ENCODE measurements at regions of chr9 and their contacts with region 1.

Region 1: DNA sequence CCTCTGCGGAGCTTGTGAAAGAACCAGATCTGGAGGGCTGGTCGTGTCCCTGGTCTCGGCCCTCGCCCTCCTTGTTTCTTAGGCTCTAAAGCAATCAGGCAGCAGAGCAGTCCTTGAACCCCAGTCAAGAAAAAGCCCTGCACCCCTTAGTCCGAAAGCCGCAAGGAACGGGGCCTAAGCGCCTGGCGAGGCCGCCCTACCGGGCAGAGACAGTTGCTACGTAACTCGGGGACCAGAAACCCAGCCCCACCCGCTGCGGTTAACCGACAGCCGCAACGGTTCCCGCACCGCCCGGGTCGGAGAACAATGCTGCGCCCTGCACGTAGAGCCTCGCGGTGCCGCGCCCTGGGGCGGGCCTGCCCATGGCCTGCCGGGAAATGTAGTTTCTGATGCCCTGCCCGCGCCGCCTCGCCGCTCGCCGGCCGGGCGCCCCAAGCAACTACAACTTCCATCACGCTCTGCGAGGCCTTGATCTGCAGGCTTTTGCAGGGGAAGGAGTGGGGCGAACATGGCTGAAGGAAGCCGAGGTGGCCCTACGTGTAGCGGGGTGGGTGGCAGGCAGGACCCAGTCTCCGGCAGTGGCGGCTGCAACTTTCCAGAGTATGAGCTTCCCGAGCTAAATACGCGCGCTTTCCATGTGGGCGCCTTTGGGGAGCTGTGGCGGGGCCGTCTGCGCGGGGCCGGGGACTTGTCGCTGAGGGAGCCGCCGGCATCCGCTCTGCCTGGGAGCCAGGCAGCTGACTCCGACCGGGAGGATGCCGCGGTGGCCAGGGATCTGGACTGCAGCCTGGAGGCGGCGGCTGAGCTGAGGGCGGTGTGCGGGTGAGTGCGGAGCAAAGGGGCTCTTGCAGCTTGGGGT is at the start of gene SNAPC3:
- DNase-seq: peak; percentile 99
- H3K4me3 ChIP-seq: peak within 1 kb of the TSS; percentile 83 to 98 (median 91)
- H3K27ac ChIP-seq: peak within 1 kb of the TSS; percentile 84 to 91 (median 88)
- H3K4me1 ChIP-seq: peaks cover 28 to 57% (median 45%) of the 10 kb centered on the region in 6 donors
- H3K27me3 ChIP-seq: no peaks in the 10 kb centered on the region
- CTCF ChIP-seq: peak in 9 of 11 experiments; percentile 3 to 47 (median 34)
- POLR2A ChIP-seq: peak in 2 of 3 donors; percentile 20 to 67
- total RNA-seq, gene SNAPC3: 27.7 to 45.8 (median 34.4) TPM

Region 2: GRCh38 chr9:15306757-15307534 is 115.7 kb before region 1 on chr9 and contains the start of gene TTC39B:
- intact Hi-C with region 1: loop called (anchors 10 kb)
- DNase-seq: peak; percentile 98
- H3K4me3 ChIP-seq: peak within 1 kb of the TSS; percentile 65 to 92 (median 84)
- H3K27ac ChIP-seq: peak within 1 kb of the TSS; percentile 75 to 91 (median 86)
- H3K4me1 ChIP-seq: peaks cover 17 to 46% (median 33%) of the 10 kb centered on the region in 6 donors
- H3K27me3 ChIP-seq: no peaks in the 10 kb centered on the region
- CTCF ChIP-seq: peak in 1 of 11 experiments; percentile 29
- POLR2A ChIP-seq: peak in 1 of 3 donors; percentile 32
- total RNA-seq, gene TTC39B: 16.8 to 24.1 (median 19.6) TPM

Region 3: GRCh38 chr9:15370466-15371447 is 51.8 kb before region 1 on chr9:
- intact Hi-C with region 1: no loop called
- DNase-seq: no peak
- H3K4me3 ChIP-seq: no peak overlapping the region
- H3K27ac ChIP-seq: no peak overlapping the region
- H3K4me1 ChIP-seq: no peaks in the 10 kb centered on the region
- H3K27me3 ChIP-seq: no peaks in the 10 kb centered on the region
- CTCF ChIP-seq: no peak
- POLR2A ChIP-seq: no peak

Region 4: DNA sequence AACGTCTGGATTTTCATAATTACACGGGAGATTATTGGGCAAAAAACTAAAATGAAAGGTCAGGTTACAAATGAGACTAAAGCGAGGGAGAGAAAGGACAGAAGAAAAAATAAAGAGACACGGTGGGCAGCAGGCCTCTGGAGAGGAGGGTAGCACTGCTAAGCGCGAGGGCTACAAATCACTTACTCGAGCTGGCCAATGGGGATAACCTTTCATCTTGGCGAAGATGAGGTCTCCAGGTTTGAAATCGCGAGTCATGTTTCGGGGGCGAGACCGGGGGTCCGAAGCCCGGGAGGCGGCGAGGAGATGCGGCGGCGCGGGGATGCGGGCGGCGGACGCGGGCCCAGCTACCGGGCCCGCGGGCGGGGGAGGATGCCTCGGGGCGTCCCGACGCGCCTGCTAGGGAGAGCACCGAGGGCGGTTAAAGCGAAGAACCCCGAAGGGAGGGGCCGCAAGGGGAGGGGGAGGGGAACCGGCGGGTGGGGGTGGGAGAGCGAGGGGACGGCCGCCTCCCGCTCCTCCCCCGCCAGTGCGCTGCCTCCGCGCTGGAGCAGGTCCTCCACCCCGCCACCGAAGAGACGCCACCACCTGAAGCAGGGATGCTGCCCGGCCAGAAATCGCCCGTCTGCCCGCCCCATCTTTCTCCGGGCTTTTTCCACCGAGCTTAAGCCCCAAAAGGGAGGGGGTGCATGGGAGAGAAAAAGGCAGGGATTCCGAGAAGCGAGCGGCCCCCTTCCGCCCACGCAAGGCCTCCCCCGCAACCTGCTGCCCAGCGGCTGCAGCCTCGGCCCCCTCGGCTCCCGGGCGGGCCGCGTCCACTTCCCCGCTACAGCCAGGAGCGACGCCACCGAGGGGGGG is 87.6 kb after region 1 on chr9:
- intact Hi-C with region 1: loop called (anchors 10 kb)
- DNase-seq: peak; percentile 91
- H3K4me3 ChIP-seq: peak overlapping the region; percentile 82 to 100 (median 96)
- H3K27ac ChIP-seq: peak overlapping the region; percentile 93 to 99 (median 96)
- H3K4me1 ChIP-seq: peaks cover 10 to 78% (median 45%) of the 10 kb centered on the region in 6 donors
- H3K27me3 ChIP-seq: no peaks in the 10 kb centered on the region
- CTCF ChIP-seq: no peak
- POLR2A ChIP-seq: no peak